Posterior cingulate gyrus (tissue), 11 donors: ENCODE measurements at regions of chr16 and their contacts with region 1.

Region 1: DNA sequence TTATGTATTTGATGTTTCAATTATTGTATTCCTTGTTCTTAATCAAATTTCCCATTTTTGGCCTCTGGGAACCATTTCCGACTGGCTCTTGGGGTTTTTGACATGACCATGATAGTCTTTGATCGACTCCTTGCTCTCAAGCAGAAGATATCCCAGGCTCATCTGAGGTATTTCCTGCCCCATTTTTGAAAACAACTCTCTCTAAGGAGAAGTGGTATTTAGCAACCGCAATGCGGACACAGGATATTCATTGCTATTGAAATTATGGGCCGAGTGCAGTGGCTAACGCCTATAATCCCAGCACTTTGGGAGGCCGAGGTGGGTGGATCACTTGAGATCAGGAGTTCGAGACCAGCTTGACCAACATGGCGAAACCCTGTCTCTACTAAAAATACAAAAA is 5.5 kb downstream of the TANGO6 start:
- DNase-seq: no peak

Region 2: GRCh38 chr16:68776821-68777351 is 71.9 kb before region 1 on chr16:
- intact Hi-C with region 1: no loop called
- DNase-seq: peak in 1 of 10 donors; percentile 5

Region 3: GRCh38 chr16:68790130-68790761 is 58.5 kb before region 1 on chr16:
- intact Hi-C with region 1: no loop called
- DNase-seq: peak in 1 of 10 donors; percentile 29

Region 4: DNA sequence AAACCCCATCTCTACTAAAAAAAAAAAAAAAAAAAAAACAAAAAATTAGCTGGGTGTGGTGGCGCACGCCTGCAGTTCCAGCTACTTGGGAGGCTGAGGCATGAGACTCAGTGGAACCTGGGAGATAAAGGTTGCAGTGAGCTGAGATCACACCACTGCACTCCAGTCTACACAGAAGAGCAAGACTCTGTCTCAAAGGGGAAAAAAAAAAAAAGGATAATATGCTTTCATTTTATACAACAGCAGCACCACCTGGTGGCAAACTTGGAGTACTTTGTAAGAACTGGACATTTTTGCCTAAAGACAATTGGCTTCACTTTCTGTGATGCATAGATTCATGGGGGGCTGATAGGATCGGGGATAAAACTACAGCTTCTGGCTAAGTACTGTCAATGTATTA is 275.1 kb after region 1 on chr16:
- intact Hi-C with region 1: loop called (anchors 5 kb)
- DNase-seq: peak in 2 of 10 donors; percentile 42 to 45